ENCODE measurements at regions of chr1 and their contacts with region 1.

Region 1: DNA sequence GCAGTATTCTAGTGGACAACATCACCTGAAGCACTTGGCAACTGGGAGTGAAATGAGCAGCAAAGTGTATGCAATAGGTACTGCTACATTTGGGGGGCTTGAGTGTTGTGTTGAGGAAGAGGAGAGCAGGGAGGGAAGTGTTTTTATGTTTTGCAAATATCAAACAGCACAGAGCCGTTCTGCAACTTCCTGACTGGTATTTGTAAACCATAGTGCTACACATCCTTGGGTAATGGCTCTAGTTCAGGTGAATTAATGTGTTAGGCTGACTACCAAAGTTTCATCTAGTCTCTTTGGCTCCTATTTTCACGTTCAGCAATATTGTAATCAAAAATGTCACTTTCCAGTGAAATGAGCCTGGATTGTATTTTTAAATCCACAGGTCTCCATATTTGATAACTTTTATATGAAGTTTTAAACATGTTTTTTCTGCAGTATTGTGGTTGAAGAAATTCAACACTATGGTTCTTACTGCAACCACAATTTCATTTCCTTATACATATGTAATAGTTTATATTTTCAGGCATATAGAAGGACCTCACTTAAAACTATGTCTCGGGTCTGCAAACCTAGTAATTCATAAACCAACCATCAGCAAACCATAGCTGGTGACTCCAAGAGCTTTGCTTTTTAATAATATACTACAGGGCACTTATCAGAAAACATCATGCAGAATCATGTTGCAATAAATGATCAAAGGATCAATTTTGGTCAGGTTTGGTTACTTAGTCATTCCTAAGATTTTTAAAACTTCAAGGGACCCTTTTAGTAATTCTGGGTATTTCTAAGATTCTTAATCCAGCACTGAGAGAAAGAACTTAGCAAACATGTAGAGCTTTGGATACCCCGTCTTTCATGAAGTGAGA is 18.8 kb downstream of the ZBTB37 start:
- DNase-seq: no peak
- H3K4me3 ChIP-seq: no peak overlapping the region
- H3K27ac ChIP-seq: no peak overlapping the region
- H3K4me1 ChIP-seq: peaks cover 0 to 7% (median 2%) of the 10 kb centered on the region in 4 experiments; a peak in 2 of 7 replicates
- H3K27me3 ChIP-seq: no peaks in the 10 kb centered on the region
- CTCF ChIP-seq: no peak
- EP300 ChIP-seq: no peak
- POLR2A ChIP-seq: no peak
- RAD21 ChIP-seq: no peak

Region 2: DNA sequence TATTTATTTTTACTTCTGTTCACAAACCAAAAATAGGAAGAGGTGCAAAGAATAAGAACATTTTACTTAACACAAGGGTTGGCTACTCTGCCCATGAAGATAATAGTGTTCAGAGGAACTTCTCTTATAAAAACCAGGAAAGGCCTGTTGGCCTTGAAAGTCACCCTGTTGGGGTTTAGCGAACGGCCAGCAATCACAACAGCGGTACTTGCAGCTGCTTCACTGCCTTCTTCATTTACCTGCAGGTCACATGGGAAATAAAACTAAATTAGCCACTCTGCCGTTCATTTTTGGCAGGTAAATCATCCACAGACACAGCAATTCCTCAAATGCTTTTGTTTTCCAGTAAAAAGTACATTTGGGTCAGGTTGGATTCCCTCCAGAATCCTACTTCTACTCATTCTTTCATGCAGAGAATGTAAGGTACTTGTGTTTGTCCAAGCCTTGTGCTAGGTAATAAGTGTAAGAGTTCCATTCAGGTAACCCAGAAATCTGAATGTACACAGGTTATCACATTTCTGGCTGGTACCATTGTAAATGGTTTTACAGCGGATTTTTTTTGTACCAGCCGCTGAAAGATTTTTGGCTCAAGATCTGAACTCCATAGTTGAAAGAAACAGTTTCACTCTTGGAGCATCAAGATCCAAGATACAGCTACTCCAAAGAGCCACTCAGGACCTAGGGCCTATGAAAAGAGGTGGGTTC is 17.0 kb after region 1 on chr1:
- CTCF ChIA-PET with region 1: no interaction called
- POLR2A ChIA-PET with region 1: no interaction called
- DNase-seq: no peak
- H3K4me3 ChIP-seq: no peak overlapping the region
- H3K27ac ChIP-seq: no peak overlapping the region
- H3K4me1 ChIP-seq: peaks cover 0 to 14% (median 2%) of the 10 kb centered on the region in 4 experiments; a peak in 4 of 7 replicates
- H3K27me3 ChIP-seq: no peaks in the 10 kb centered on the region
- CTCF ChIP-seq: no peak
- EP300 ChIP-seq: no peak
- POLR2A ChIP-seq: no peak
- RAD21 ChIP-seq: no peak

Region 3: GRCh38 chr1:173914366-173914871 is 27.4 kb after region 1 on chr1:
- CTCF ChIA-PET with region 1: interaction called, 18 read pairs
- POLR2A ChIA-PET with region 1: no interaction called
- DNase-seq: peak; percentile 3 to 56
- H3K4me3 ChIP-seq: no peak overlapping the region
- H3K27ac ChIP-seq: no peak overlapping the region
- H3K4me1 ChIP-seq: no peaks in the 10 kb centered on the region; a peak in 1 of 7 replicates
- H3K27me3 ChIP-seq: no peaks in the 10 kb centered on the region
- CTCF ChIP-seq: peak; percentile 56 to 80 (median 59)
- EP300 ChIP-seq: no peak
- POLR2A ChIP-seq: no peak
- RAD21 ChIP-seq: peak; percentile 45 to 54

Measured in H1 (cell line).